Breast epithelium (tissue), 4 donors: ENCODE measurements at regions of chr5 and their contacts with region 1.

Region 1: GRCh38 chr5:154478224-154478565 is at the start of gene HAND1:
- DNase-seq: no peak
- H3K4me3 ChIP-seq: peak within 1 kb of the TSS; percentile 36 to 63 (median 39)
- H3K27ac ChIP-seq: no peak within 1 kb of the TSS
- H3K4me1 ChIP-seq: peaks cover 0 to 26% of the 10 kb centered on the region in 2 donors
- H3K27me3 ChIP-seq: peaks cover 14 to 100% of the 10 kb centered on the region in 2 donors
- CTCF ChIP-seq: no peak
- POLR2A ChIP-seq: no peak
- total RNA-seq, gene HAND1: 0.16 to 0.59 TPM in 2 of 3 donors, not detected in the other

Region 2: DNA sequence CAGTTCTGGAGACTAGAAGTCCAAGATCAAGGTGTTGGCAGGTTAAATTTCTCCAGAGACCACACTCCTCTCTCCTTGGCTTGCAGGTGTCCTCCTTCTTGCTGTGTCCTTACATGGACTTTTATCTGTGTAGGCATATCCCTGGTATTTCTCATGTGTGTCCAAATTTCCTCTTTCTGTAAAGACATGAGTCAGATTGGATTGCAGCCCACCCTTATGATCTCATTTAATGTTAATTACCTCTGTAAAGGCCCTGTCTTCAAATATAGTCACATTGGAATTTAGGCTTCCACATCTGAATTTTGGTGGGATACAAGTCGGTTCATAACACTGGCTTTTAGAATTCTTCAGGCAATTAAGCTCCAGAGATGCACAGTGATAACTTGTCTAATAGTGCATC is 1310.0 kb before region 1 on chr5:
- intact Hi-C with region 1: loop called (anchors 5 kb)
- DNase-seq: no peak
- H3K4me3 ChIP-seq: no peak overlapping the region
- H3K27ac ChIP-seq: no peak overlapping the region
- H3K4me1 ChIP-seq: no peaks in the 10 kb centered on the region
- H3K27me3 ChIP-seq: no peaks in the 10 kb centered on the region
- CTCF ChIP-seq: no peak
- POLR2A ChIP-seq: no peak

Region 3: GRCh38 chr5:153641183-153641688 is 837.0 kb before region 1 on chr5:
- intact Hi-C with region 1: no loop called
- DNase-seq: no peak
- H3K4me3 ChIP-seq: no peak overlapping the region
- H3K27ac ChIP-seq: no peak overlapping the region
- H3K4me1 ChIP-seq: no peaks in the 10 kb centered on the region
- H3K27me3 ChIP-seq: no peaks in the 10 kb centered on the region
- CTCF ChIP-seq: no peak
- POLR2A ChIP-seq: no peak

Region 4: DNA sequence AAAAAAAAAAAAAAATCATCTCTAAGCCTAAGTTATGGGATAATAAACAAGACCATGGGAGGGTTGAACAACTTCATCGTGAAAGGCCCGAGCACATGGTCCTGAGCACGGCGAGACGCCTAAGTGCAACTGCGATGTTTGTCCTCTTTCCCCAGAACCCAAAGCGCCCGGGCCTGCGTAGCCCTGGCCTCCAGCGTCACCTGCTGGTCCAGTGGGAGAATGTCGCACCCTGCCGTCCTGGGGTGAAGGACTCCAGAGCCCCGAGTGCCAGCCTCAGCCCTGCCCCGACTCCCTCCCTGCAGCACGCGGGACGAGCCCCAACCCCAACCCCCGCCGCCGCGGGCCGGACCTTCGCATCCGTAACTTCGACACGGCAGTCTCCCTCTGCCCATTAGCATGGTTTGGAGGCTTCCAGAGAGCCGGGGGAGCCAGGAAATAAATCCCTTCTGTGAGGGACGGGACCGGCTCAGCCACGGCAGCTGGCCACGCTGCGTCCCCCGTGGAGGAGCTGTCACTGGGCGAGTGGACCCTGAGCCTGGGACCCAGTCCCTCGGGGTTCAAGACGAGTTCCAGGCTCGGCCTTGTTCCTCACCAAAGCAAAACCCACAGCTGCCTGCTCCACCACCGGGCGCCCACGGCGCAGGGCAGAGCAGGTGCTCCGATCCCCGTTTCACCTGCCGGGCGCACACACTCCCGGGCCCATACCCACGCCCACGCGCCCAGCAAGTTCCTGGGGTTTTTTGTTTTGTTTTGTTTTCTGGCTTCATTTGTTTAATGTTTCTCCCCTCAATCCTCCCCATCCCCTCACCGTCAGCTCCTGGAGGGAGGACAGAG is 132.3 kb after region 1 on chr5:
- intact Hi-C with region 1: loop called (anchors 10 kb)
- DNase-seq: peak; percentile 29 to 69
- H3K4me3 ChIP-seq: peak overlapping the region; percentile 20 to 58 (median 37)
- H3K27ac ChIP-seq: no peak overlapping the region
- H3K4me1 ChIP-seq: peaks cover 0 to 10% of the 10 kb centered on the region in 2 donors
- H3K27me3 ChIP-seq: peaks cover 0 to 41% of the 10 kb centered on the region in 2 donors
- CTCF ChIP-seq: peak; percentile 10 to 82 (median 67)
- POLR2A ChIP-seq: no peak